WTC11 (cell line): ENCODE measurements at regions of chr6 and their contacts with region 1.

Region 1: GRCh38 chr6:99241905-99242534 is 107.5 kb downstream of the FAXC start:
- DNase-seq: peak; percentile 37
- ATAC-seq: peak; percentile 61
- H3K4me3 Mint-ChIP-seq: no peak overlapping the region
- H3K27ac Mint-ChIP-seq: no peak overlapping the region
- H3K4me1 Mint-ChIP-seq: peaks cover 5% of the 10 kb centered on the region; the same call in 1 of the 2 replicates
- H3K27me3 Mint-ChIP-seq: no peaks in the 10 kb centered on the region
- CTCF ChIP-seq: peak; percentile 38; the same call in 1 of the 2 replicates

Region 2: GRCh38 chr6:99151634-99152344 is 90.2 kb before region 1 on chr6:
- CTCF ChIA-PET with region 1: interaction called, 37 read pairs
- POLR2A ChIA-PET with region 1: no interaction called
- DNase-seq: peak; percentile 84
- ATAC-seq: peak; percentile 93
- H3K4me3 Mint-ChIP-seq: no peak overlapping the region
- H3K27ac Mint-ChIP-seq: no peak overlapping the region
- H3K4me1 Mint-ChIP-seq: peaks cover 10% of the 10 kb centered on the region
- H3K27me3 Mint-ChIP-seq: peaks cover 4% of the 10 kb centered on the region; the same call in 1 of the 2 replicates
- CTCF ChIP-seq: peak; percentile 60

Region 3: DNA sequence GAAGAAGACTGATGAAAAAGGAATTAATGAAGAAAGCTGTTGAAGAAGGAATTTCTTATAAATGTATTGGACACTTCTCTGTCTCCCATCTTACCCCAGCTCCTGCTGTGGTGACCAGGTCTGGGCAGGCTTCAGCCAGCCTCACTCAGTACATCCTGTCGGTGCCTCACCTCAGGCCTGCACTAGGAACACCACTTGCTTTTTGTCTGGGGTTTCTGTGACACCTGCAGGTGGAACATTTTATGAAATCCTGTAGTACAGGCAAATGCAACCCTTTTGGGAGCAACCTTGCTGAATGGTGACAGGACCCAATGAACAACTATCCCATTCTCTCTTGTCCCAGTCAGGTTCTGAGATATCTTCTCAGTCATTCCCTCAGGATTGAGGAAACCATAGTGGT is 494.3 kb after region 1 on chr6:
- CTCF ChIA-PET with region 1: no interaction called
- POLR2A ChIA-PET with region 1: no interaction called
- DNase-seq: peak; percentile 17
- ATAC-seq: peak; percentile 82
- H3K4me3 Mint-ChIP-seq: no peak overlapping the region
- H3K27ac Mint-ChIP-seq: no peak overlapping the region
- H3K4me1 Mint-ChIP-seq: no peaks in the 10 kb centered on the region
- H3K27me3 Mint-ChIP-seq: peaks cover 14% of the 10 kb centered on the region
- CTCF ChIP-seq: no peak